ENCODE measurements at regions of chr19 and their contacts with region 1.

Region 1: DNA sequence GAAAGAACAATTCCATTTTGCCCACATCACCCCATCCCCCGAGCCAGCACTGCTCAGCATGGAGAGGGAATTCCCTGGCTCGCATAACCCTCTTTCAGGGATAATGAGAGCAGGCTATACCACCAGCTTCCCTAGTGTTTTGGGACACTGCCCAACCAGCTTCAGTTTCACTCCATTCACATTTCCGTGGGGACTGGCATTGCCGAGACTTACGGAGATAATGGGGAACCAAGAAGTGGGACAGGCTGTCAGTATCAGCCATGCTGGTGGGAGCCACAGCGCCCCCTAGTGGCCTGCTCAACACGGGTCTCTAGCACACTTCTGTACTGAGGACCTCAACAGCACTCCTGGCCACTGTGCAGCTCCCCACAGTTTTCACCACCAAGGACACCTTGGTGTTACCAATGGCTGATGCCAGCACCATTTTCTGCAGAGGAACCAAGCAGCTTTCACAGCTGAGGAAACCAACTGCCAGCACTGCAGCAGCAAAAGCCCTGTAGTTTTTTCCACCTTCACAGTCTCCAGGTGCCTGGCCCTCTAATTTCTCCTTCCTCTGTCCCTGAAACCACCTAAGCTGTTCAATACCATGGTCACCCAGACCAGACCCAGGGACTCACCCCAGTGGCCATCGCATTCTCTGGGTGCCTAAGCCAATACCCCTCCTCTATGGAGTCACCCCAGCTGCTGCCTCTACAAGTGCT is 23.7 kb downstream of the SLC6A16 start:
- DNase-seq: no peak
- H3K4me3 ChIP-seq: no peak overlapping the region
- CTCF ChIP-seq: peak; percentile 87

Region 2: GRCh38 chr19:49210108-49210900 is 91.0 kb before region 1 on chr19:
- CTCF ChIA-PET with region 1: no interaction called
- POLR2A ChIA-PET with region 1: no interaction called
- DNase-seq: no peak
- H3K4me3 ChIP-seq: no peak overlapping the region
- CTCF ChIP-seq: no peak

Region 3: DNA sequence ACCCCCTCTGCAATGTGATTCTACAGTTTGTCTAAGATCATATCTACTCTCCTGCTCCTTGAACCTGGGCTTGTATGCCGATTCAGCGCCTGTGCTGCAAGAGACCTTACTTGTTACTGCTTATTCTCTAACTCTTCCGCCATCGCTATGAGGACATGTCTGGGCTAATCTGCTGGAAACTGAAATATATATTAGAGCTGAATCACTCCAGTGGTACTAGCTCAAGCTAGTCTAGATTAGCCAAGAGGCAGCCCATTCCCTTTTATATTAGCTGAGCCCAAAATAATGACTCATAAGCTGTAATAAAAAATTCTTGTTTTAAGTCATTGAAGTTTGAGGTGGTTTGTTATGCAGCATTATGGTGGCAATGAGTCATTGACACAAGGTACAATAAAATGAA is 29.1 kb before region 1 on chr19:
- CTCF ChIA-PET with region 1: interaction called, 13 read pairs
- POLR2A ChIA-PET with region 1: no interaction called
- DNase-seq: peak; percentile 3
- H3K4me3 ChIP-seq: no peak overlapping the region
- CTCF ChIP-seq: no peak

Region 4: DNA sequence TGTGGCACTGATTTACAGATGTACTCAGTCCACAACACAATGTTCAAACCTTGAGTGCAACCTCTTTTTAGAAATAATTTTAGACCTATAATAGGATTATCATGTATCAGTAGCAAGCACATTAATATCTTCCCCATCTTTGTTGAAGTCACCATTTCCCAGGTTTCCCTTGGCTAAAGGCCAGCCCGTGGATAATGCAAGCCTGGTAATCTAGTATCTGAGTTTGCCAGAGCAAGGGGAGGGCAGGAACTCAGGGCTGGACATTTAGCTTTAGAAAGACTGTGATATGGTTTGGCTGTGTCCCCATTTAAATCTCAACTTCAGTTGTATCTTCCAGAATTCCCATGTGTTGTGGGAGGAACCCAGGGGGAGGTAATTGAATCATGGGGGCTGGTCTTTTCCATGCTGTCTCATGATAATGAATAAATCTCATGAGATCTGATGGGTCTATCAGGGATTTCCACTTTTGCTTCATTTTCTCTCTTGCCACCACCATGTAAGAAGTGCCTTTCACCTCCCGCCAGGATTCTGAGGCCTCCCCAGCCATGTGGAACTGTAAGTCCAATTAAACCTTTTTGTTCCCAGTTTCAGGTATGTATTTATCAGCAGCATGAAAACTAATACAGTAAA is 14.1 kb before region 1 on chr19:
- CTCF ChIA-PET with region 1: interaction called, 30 read pairs
- POLR2A ChIA-PET with region 1: no interaction called
- DNase-seq: no peak
- H3K4me3 ChIP-seq: no peak overlapping the region
- CTCF ChIP-seq: no peak

Region 5: DNA sequence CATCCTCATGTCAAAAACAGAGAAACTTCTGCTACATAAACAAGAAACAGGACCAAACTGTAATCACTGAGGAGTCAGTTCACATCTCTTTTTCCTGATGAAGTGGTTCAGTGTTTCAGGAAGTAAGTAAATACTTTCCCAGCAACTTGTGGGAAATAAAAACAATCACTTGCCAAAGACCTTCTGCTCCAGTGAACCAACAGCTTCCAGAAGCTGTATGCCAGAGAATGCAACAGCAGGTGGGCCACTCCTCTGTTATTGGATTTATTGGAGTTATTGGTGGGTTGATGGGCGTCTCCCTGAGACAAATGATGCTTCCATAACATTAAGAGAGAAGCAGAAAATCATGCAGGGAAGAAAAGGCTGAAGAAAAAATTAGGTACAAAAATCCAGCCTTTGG is 13.8 kb after region 1 on chr19:
- CTCF ChIA-PET with region 1: interaction called, 58 read pairs
- POLR2A ChIA-PET with region 1: no interaction called
- DNase-seq: no peak
- H3K4me3 ChIP-seq: no peak overlapping the region
- CTCF ChIP-seq: no peak

Region 6: DNA sequence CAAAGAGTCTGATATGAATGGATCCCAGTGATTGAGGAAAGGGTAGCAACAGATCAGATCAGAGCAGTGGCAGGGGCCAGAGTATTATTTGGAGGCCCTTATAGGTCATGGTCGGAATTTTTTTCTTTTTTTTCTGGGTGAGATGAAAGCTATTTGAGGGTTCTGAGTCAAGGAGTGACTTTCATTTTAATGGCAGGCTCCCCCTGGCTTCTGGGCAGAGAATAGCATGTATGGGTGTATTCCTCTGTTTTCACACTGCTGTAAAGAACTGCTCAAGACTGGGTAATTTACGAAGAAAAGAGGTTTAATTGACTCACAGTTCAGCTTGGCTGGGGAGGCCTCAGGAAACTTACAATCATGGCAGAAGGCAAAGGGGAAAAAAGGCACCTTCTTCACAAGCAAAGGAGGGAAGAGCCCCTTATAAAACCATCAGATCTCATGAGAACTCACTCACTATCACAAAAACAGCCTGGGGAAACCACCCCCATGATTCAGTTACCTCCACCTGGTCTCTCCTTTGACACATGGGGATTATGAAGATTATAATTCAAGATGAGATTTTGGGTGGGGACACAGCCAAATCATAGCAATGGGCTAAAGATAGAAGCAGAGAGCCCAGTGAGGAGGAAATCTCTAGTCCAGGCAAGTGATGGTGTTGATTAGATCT is 26.7 kb after region 1 on chr19:
- CTCF ChIA-PET with region 1: interaction called, 31 read pairs
- POLR2A ChIA-PET with region 1: no interaction called
- DNase-seq: no peak
- H3K4me3 ChIP-seq: no peak overlapping the region
- CTCF ChIP-seq: peak; percentile 46

Region 7: GRCh38 chr19:49359851-49360820 is 58.8 kb after region 1 on chr19:
- CTCF ChIA-PET with region 1: interaction called, 11 read pairs
- POLR2A ChIA-PET with region 1: no interaction called
- DNase-seq: no peak
- H3K4me3 ChIP-seq: peak overlapping the region; percentile 85
- CTCF ChIP-seq: no peak